Right cardiac atrium (tissue), 5 donors: ENCODE measurements at regions of chr11 and their contacts with region 1.

Region 1: GRCh38 chr11:78645226-78646202 is 70.8 kb upstream of the NARS2 start:
- DNase-seq: peak; percentile 55 to 85 (median 82)
- ATAC-seq: peak; percentile 76 to 87
- H3K4me3 ChIP-seq: no peak overlapping the region
- H3K27ac ChIP-seq: no peak overlapping the region
- H3K4me1 ChIP-seq: no peaks in the 10 kb centered on the region
- H3K27me3 ChIP-seq: no peaks in the 10 kb centered on the region

Region 2: DNA sequence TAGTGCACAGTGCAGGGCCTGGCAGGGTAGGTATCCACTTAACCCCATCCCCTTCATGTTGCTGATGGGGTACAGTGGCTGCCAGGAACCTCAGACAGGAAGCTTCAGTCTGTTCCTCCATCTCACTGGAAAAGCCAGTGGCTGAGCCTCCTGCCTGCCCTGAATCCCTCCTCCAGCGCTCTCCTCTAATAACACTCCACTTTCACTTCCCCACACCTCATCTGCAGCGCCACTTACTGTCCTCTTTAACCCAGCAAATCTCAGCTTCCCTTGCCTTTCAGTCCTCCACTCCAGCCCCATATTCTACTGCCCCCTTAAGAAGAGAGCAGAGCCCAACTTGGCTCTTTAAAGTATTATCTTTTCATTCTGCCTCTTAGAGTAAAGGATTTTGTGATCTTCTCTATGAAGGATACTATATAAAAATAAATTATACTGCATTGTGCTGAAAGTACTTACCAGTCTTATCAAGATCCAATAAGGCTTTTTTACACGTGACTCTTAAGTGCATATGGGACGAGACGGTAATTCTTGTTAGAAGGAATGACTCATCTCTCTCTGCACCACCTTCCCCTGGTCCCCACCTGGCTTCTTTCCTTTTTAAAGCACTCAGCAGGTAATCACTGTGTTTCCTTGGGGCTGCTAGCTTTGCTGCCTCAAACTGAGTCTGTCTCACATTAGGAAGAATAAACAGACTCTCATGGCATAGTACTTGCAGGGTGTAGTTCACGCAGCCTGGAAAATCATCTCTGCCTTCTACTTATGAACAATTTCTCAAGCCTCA is 167.2 kb after region 1 on chr11:
- intact Hi-C with region 1: loop called in 2 of 4 experiments (anchors 10 kb)
- DNase-seq: peak in 1 of 3 donors; percentile 44
- ATAC-seq: peak; percentile 52 to 62
- H3K4me3 ChIP-seq: no peak overlapping the region
- H3K27ac ChIP-seq: no peak overlapping the region
- H3K4me1 ChIP-seq: peaks cover 5% of the 10 kb centered on the region
- H3K27me3 ChIP-seq: no peaks in the 10 kb centered on the region

Region 3: DNA sequence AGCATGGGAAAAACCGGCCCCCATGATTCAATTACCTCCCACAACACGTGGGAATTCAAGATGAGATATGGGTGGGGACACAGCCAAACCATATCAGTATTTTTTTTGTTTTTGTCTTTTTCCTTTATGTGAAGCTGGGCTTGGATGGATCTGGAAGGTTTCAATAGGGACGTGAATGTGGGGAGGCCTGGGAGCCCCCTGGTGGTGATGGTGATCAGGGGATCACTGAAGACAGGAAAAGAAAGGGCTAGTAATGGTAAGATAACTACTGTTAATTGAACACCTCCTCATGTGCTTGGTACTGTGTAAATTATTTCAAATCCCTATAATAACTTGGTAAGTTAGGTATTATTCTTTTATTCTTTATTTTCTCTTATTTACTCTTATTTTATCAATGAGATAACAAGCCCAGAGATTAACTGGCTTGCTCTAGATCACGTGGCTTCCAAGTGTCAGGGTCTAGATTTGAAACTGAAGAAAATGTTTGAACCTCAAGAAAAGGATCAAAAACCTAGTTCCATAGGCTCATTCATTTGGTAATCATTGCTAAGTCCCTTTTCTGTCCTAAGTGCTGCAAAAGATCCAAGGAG is 431.1 kb after region 1 on chr11:
- intact Hi-C with region 1: loop called (anchors 5 to 10 kb)
- DNase-seq: peak; percentile 53 to 83 (median 71)
- ATAC-seq: peak in 1 of 2 donors; percentile 47
- H3K4me3 ChIP-seq: no peak overlapping the region
- H3K27ac ChIP-seq: no peak overlapping the region
- H3K4me1 ChIP-seq: no peaks in the 10 kb centered on the region
- H3K27me3 ChIP-seq: no peaks in the 10 kb centered on the region

Region 4: GRCh38 chr11:79092791-79093353 is 447.4 kb after region 1 on chr11:
- intact Hi-C with region 1: loop called in 1 of 4 experiments (anchors 5 kb)
- DNase-seq: no peak
- ATAC-seq: peak; percentile 52 to 65
- H3K4me3 ChIP-seq: no peak overlapping the region
- H3K27ac ChIP-seq: no peak overlapping the region
- H3K4me1 ChIP-seq: no peaks in the 10 kb centered on the region
- H3K27me3 ChIP-seq: no peaks in the 10 kb centered on the region

Region 5: DNA sequence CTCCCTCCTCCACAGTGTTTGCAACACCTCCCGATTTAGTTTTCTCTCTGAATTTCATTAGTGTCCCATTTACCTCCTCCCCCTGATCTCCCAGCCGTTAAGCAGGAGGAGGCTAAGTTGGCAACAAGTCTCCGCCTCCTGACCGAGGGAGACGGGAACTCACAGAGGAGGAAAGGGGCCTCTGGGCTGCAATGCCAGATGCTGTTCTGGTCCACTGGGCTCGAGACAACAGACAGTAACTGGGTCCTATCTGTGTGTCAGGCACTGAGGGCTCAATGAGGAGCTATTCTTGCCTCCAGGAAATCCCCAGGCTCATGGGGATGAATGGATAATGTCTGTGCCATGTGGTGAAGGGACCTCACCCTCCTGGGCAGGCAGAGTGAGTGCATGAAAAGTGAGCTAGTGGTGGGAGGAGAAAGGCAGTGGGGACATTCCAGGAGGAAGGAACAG is 567.3 kb after region 1 on chr11:
- intact Hi-C with region 1: no loop called
- DNase-seq: no peak
- ATAC-seq: no peak
- H3K4me3 ChIP-seq: no peak overlapping the region
- H3K27ac ChIP-seq: no peak overlapping the region
- H3K4me1 ChIP-seq: no peaks in the 10 kb centered on the region
- H3K27me3 ChIP-seq: no peaks in the 10 kb centered on the region

Region 6: GRCh38 chr11:79259402-79260199 is 614.1 kb after region 1 on chr11:
- intact Hi-C with region 1: loop called in 1 of 4 experiments (anchors 10 kb)
- DNase-seq: no peak
- ATAC-seq: no peak
- H3K4me3 ChIP-seq: no peak overlapping the region
- H3K27ac ChIP-seq: no peak overlapping the region
- H3K4me1 ChIP-seq: no peaks in the 10 kb centered on the region
- H3K27me3 ChIP-seq: no peaks in the 10 kb centered on the region

Region 7: GRCh38 chr11:79493555-79494171 is 848.1 kb after region 1 on chr11:
- intact Hi-C with region 1: loop called in 2 of 4 experiments (anchors 10 kb)
- DNase-seq: peak; percentile 49 to 85 (median 81)
- ATAC-seq: peak; percentile 73 to 86
- H3K4me3 ChIP-seq: no peak overlapping the region
- H3K27ac ChIP-seq: no peak overlapping the region
- H3K4me1 ChIP-seq: no peaks in the 10 kb centered on the region
- H3K27me3 ChIP-seq: no peaks in the 10 kb centered on the region

Region 8: GRCh38 chr11:80146232-80146631 is 1500.7 kb after region 1 on chr11:
- intact Hi-C with region 1: loop called in 1 of 4 experiments (anchors 10 kb)
- DNase-seq: no peak
- ATAC-seq: no peak
- H3K4me3 ChIP-seq: no peak overlapping the region
- H3K27ac ChIP-seq: no peak overlapping the region
- H3K4me1 ChIP-seq: peaks cover 2% of the 10 kb centered on the region
- H3K27me3 ChIP-seq: no peaks in the 10 kb centered on the region